Activated CD4-positive, alpha-beta memory T cell treated with anti-CD3 and anti-CD28 coated beads for 36 hours (primary cell): ENCODE measurements at regions of chr12 and their contacts with region 1.

Region 1: GRCh38 chr12:108838194-108839017 is 19.0 kb downstream of the SSH1 start:
- DNase-seq: peak; percentile 90
- H3K4me3 Mint-ChIP-seq: peak overlapping the region; percentile 63
- H3K27ac Mint-ChIP-seq: peak overlapping the region; percentile 92
- H3K4me1 Mint-ChIP-seq: peaks cover 38% of the 10 kb centered on the region
- H3K27me3 Mint-ChIP-seq: no peaks in the 10 kb centered on the region

Region 2: GRCh38 chr12:108338915-108339657 is 499.3 kb before region 1 on chr12 and contains the start of gene CMKLR1:
- CTCF ChIA-PET with region 1: no interaction called
- POLR2A ChIA-PET with region 1: no interaction called
- intact Hi-C with region 1: no loop called
- DNase-seq: no peak
- H3K4me3 Mint-ChIP-seq: no peak within 1 kb of the TSS
- H3K27ac Mint-ChIP-seq: no peak within 1 kb of the TSS
- H3K4me1 Mint-ChIP-seq: peaks cover under 1% of the 10 kb centered on the region
- H3K27me3 Mint-ChIP-seq: peaks cover 14% of the 10 kb centered on the region
- total RNA-seq, gene CMKLR1: not detected

Region 3: GRCh38 chr12:108562348-108563135 is 275.9 kb before region 1 on chr12 and contains the start of gene ISCU:
- CTCF ChIA-PET with region 1: no interaction called
- POLR2A ChIA-PET with region 1: no interaction called
- intact Hi-C with region 1: loop called (anchors 10 kb)
- DNase-seq: peak; percentile 99
- H3K4me3 Mint-ChIP-seq: peak within 1 kb of the TSS; percentile 100
- H3K27ac Mint-ChIP-seq: peak within 1 kb of the TSS; percentile 99
- H3K4me1 Mint-ChIP-seq: peaks cover 57% of the 10 kb centered on the region
- H3K27me3 Mint-ChIP-seq: no peaks in the 10 kb centered on the region
- total RNA-seq, gene ISCU: 88.6 to 94.3 TPM

Region 4: DNA sequence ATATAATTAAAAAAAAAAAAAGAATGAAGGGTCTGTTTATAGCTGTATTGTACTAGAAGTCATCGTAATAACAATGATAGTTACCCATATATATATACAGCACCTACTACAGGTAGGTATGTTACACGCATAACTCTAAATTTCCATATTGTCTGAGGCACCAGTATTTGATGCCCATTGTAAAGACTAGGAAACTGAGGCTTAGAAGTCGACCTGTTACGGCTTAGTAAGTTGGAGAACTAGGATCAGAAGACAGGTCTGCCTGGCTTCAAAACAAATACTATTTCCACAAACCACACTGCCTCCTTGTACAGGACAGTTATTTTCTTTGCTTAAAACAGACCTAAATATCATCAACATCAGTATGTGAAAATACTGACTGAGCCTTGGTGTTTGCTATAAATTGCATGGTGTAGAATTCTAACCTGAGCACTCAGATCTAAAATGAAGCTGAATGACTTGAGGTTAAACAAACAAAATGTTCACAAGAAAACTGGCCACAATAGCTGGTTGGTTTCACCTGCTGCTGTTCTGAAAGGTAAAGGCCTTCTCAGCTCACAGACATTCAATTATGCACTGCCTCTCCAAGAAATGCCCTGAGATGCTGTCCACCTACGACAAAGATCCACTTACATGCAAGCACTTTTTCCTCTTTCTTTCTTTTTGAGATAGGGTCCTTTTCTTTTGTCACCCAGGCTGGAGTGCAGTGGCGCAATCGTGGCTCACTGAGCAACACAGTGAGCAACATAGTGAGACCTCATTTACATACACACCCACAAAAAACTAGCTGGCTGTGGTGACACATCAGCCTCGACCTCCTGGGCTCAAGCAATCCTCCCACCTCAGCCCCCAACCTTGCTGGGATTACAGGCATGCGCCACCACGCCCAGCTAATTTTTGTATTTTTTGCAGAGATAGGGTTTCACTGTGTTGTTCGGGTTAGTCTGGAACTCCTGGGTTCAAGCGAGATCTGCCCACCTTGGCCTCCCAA is 16.7 kb before region 1 on chr12:
- CTCF ChIA-PET with region 1: no interaction called
- POLR2A ChIA-PET with region 1: interaction called, 3 read pairs
- intact Hi-C with region 1: loop called (anchors 2 kb)
- DNase-seq: peak; percentile 60
- H3K4me3 Mint-ChIP-seq: no peak overlapping the region
- H3K27ac Mint-ChIP-seq: peak overlapping the region; percentile 47
- H3K4me1 Mint-ChIP-seq: peaks cover 29% of the 10 kb centered on the region
- H3K27me3 Mint-ChIP-seq: no peaks in the 10 kb centered on the region

Region 5: GRCh38 chr12:108850854-108851573 is 12.6 kb after region 1 on chr12:
- CTCF ChIA-PET with region 1: no interaction called
- POLR2A ChIA-PET with region 1: interaction called, 14 read pairs
- intact Hi-C with region 1: loop called (anchors 1 kb)
- DNase-seq: no peak
- H3K4me3 Mint-ChIP-seq: no peak overlapping the region
- H3K27ac Mint-ChIP-seq: no peak overlapping the region
- H3K4me1 Mint-ChIP-seq: peaks cover 29% of the 10 kb centered on the region
- H3K27me3 Mint-ChIP-seq: no peaks in the 10 kb centered on the region

Region 6: GRCh38 chr12:108875682-108876361 is 37.4 kb after region 1 on chr12:
- CTCF ChIA-PET with region 1: no interaction called
- POLR2A ChIA-PET with region 1: no interaction called
- intact Hi-C with region 1: no loop called
- DNase-seq: no peak
- H3K4me3 Mint-ChIP-seq: no peak overlapping the region
- H3K27ac Mint-ChIP-seq: no peak overlapping the region
- H3K4me1 Mint-ChIP-seq: no peaks in the 10 kb centered on the region
- H3K27me3 Mint-ChIP-seq: no peaks in the 10 kb centered on the region